ENCODE measurements at regions of chr4 and their contacts with region 1.

Region 1: DNA sequence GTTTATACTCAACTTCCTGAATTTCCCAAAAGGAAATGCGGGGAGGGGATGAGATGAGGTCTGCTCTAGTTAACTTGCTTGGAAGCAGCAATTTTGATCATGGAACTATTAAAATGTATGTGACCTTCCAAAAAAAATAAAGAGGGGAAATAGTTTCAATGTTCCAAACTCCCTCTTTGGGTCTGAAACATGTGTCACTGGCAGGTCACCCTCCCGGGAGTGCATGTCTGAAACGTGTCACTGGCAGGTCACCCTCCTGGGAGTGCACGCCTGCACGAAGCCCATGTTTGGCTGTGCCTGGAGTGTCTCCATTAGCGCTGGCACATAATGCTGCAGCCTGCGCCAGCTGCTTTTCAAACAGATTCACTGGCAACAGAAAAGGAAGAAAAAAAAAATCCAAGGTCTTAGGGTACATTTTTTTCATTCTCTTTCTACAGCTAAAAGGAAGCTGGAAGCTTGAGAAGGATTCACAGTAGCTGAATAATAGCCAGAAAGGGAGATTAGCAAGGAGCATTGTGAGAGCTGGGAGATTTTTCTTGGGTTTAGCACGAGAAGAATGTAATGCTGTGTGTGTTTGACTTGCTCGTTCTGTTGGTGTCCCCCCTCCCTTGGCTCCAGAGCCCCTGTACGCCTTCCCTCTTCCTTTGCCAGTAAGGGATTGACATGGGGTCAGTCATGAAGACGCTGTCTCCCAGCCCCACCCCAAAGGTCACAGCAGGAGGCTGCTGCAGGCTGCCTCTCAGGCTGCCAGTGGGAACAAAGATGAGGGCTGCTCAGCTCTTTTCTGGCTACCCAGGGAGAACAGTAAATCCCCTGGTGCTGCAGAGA is 39.2 kb upstream of the TLR3 start:
- DNase-seq: peak; percentile 5
- ATAC-seq: peak; percentile 40
- H3K4me3 ChIP-seq: no peak overlapping the region
- H3K27ac ChIP-seq: no peak overlapping the region
- H3K4me1 ChIP-seq: no peaks in the 10 kb centered on the region
- H3K27me3 ChIP-seq: peaks cover 26% of the 10 kb centered on the region
- CTCF ChIP-seq: no peak
- POLR2A ChIP-seq: no peak
- RAD21 ChIP-seq: no peak

Region 2: DNA sequence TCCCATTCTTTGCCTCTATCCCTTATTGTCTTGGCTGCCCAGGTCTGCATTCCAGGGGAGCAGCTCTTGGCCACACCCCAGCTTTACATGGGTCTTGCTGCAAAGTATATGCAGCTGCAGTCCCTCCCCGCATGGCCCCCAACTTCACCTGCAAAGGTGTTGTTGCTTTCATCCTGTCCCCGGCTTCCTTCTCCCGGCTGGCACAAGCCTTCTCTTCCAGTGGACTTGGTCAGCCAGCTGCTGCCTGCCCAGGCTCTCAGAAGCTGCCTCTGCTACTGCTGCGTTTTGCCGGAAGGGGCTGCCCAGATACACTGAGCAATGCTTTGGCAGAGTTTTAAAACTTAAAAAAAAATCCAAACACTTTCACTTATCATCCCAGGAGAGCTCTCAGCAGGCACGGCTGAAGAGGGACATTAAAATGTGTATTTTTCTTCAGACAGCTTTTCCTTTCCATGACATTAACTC is 373.3 kb before region 1 on chr4:
- CTCF ChIA-PET with region 1: no interaction called
- POLR2A ChIA-PET with region 1: no interaction called
- dilution Hi-C with region 1: no loop called
- in situ Hi-C with region 1: loop called (anchors 5 kb)
- intact Hi-C with region 1: loop called (anchors 5 kb)
- DNase-seq: peak; percentile 18
- ATAC-seq: peak; percentile 84
- H3K4me3 ChIP-seq: no peak overlapping the region
- H3K27ac ChIP-seq: no peak overlapping the region
- H3K4me1 ChIP-seq: no peaks in the 10 kb centered on the region
- H3K27me3 ChIP-seq: peaks cover 25% of the 10 kb centered on the region
- CTCF ChIP-seq: peak; percentile 23; the same call in 1 of the 2 replicates
- POLR2A ChIP-seq: no peak
- RAD21 ChIP-seq: peak; percentile 33; the same call in 1 of the 2 replicates

Measured in IMR-90 (cell line).